Right ventricle myocardium superior (tissue), 1 donor: ENCODE measurements at regions of chr5 and their contacts with region 1.

Region 1: DNA sequence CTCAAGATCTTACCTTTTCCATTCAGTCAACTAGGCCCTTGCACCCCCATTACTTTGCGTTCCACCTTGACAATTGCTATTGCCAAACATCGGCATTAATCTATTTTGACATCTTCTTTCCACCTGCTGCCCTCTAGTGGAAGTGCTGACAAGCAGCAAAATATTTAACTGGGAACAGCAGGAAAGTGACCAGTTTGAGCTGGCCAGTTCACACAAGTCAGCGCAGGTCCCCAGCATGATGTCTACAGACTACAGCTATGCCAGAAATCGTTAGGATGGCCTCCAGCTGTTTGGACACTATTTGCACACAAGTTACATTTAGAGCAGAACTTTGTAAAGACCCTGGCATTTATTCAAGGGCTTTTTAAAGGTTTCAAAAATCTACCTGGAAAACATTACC is 160.1 kb downstream of the GHR start:
- DNase-seq: peak; percentile 50
- ATAC-seq: peak; percentile 45

Region 2: DNA sequence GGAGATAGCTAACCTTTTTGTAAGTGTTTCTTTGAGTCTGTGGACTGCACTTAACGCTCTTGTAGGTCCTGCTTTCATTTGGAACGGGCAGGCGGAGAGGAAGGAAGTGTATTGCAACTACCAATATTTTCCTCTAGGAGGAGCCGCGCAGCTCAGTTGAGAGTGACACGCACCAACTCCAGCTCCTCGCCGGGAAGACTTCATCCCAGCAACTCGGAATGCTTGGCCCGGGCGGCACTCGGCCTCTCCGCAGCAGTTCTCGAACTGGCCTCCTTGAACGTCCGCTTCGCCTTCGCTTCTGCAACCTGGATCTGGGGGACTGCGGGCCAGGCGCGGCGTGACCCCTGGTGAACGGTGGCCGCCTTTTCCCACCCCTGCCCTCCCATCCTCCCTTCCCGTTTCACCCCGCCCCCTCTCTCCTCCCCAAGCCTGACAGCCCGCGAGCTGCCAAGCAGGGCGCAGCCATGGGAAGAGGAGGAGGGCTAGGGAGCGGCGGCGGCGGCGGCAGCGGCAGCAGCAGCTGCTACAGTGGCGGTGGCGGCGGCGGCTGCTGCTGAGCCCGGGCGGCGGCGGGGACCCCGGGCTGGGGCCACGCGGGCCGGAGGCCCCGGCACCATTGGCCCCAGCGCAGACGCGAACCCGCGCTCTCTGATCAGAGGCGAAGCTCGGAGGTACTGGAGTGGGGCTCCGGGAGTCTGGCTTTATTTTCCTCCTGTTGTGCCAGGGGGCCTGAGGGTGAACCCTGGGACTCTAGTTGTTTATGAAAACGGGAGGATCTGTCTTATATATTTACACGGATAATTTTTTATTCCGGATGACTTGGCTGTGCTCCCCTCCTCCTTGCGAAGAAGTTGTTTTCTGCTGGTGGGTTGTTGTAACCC is 159.8 kb before region 1 on chr5 and contains the start of gene GHR:
- intact Hi-C with region 1: loop called (anchors 2 kb)
- DNase-seq: peak; percentile 85
- ATAC-seq: peak; percentile 95
- total RNA-seq, gene GHR: 12.8 TPM

Region 3: GRCh38 chr5:42767491-42768105 is 184.3 kb after region 1 on chr5:
- intact Hi-C with region 1: loop called (anchors 10 kb)
- DNase-seq: no peak
- ATAC-seq: peak; percentile 55